ENCODE measurements at regions of chr2 and their contacts with region 1.

Region 1: DNA sequence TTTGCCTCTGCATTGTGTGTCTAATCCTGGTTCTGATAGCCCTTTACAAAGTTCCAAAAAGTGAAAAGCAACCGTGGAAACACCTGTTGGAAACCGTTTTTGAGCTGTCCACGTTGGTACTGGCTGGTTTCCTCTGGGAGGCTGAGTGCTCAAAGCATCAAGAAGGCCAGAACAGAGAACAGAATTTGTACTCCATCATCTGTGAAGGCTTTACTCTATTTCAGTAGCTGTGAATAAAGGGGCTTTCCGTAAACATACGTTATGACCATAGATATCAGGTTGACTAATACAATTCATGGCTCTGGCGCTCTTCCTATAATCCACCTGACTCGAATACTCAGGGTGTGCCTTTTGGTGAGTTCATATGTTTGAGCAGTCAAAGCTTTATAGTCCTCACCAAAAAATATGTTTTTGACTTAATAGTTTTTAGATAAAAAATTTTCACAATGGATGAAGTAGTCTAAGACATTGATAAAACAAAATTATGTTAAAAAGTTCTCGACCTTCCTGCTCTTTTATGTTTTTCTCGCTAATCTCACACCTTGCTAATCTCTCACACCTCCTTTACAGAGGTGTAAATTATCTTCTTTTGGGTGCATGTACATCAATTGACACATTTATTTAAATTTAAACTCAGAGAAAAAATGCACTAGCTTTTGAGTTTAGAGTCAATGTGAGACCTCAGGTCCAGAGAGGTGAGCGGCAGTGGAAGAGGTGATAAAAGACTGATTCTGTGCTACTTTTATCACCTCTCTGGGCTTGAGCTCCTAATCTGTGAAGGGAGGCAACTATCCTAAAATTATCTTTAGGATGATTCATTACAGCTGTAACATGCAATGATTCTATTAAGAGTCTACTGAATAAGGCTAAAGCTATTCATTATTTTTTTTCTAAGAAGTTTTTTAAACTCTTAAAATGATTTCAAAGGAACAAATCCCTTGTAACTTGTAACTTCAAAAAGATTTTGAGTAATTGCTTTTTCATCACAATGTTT is 65.3 kb downstream of the CXCR4 start:
- DNase-seq: peak; percentile 33
- ATAC-seq: no peak
- H3K4me3 Mint-ChIP-seq: peak overlapping the region; percentile 44
- H3K27ac Mint-ChIP-seq: peak overlapping the region; percentile 95
- H3K4me1 Mint-ChIP-seq: peaks cover 94% of the 10 kb centered on the region
- H3K27me3 Mint-ChIP-seq: no peaks in the 10 kb centered on the region

Region 2: DNA sequence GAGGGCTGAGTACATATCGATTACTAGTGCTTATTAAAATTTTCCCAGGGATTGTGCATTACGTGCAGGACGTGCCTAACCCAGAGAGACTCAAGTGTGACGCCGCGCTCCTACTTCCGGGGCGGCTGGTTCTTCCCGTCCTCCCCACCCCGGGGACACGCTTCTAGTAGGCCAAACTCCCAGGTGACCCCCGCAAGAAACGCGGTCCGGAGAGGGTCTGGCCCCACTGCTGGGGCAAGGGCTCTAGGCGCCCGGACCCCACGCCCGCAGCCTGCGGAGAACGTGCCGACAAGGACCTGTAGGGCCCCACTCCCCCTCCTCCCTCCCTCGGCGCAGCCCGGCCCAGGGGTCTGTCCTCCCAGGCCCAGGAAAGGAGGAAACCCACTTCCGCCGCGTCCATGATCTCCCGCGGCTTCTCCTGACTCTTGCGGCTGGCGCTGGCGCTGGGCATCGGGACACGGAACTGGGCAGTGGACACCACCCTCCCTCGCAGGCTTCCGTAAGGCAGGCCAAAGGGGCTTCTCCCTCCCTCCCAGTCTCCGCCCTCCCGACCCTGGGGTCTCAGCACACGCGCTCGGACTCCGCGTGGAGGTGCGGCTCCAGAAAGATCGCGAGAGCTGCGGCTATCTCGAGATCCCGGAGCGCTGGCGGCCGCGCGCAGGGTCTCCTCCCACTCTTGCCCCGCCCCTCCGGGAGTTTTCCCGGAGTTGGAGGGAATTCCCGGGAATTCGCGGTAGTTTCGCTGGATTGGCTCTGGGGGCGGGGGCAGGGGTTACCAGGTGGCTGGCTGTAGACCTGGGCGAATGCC is 67.4 kb before region 1 on chr2 and contains the start of gene DARS1:
- CTCF ChIA-PET with region 1: interaction called, 7 read pairs
- POLR2A ChIA-PET with region 1: interaction called, 18 read pairs
- DNase-seq: peak; percentile 89
- ATAC-seq: peak; percentile 86
- H3K4me3 Mint-ChIP-seq: peak within 1 kb of the TSS; percentile 89
- H3K27ac Mint-ChIP-seq: peak within 1 kb of the TSS; percentile 98
- H3K4me1 Mint-ChIP-seq: peaks cover 55% of the 10 kb centered on the region
- H3K27me3 Mint-ChIP-seq: no peaks in the 10 kb centered on the region
- total RNA-seq, gene DARS1: 139 to 148 TPM

Region 3: GRCh38 chr2:136008205-136008865 is 44.3 kb before region 1 on chr2:
- CTCF ChIA-PET with region 1: interaction called, 12 read pairs
- POLR2A ChIA-PET with region 1: interaction called, 40 read pairs
- DNase-seq: peak; percentile 90
- ATAC-seq: peak; percentile 96
- H3K4me3 Mint-ChIP-seq: peak overlapping the region; percentile 53
- H3K27ac Mint-ChIP-seq: peak overlapping the region; percentile 99
- H3K4me1 Mint-ChIP-seq: peaks cover 63% of the 10 kb centered on the region
- H3K27me3 Mint-ChIP-seq: no peaks in the 10 kb centered on the region

Region 4: GRCh38 chr2:136107051-136108033 is 54.7 kb after region 1 on chr2:
- CTCF ChIA-PET with region 1: interaction called, 16 read pairs
- POLR2A ChIA-PET with region 1: interaction called, 4 read pairs
- DNase-seq: no peak
- ATAC-seq: no peak
- H3K4me3 Mint-ChIP-seq: no peak overlapping the region
- H3K27ac Mint-ChIP-seq: no peak overlapping the region
- H3K4me1 Mint-ChIP-seq: peaks cover 14% of the 10 kb centered on the region
- H3K27me3 Mint-ChIP-seq: no peaks in the 10 kb centered on the region

Region 5: GRCh38 chr2:136135921-136136906 is 83.5 kb after region 1 on chr2:
- CTCF ChIA-PET with region 1: interaction called, 6 read pairs
- POLR2A ChIA-PET with region 1: interaction called, 34 read pairs
- DNase-seq: peak; percentile 86
- ATAC-seq: peak; percentile 71
- H3K4me3 Mint-ChIP-seq: peak overlapping the region; percentile 44
- H3K27ac Mint-ChIP-seq: peak overlapping the region; percentile 95
- H3K4me1 Mint-ChIP-seq: peaks cover 91% of the 10 kb centered on the region
- H3K27me3 Mint-ChIP-seq: peaks cover 11% of the 10 kb centered on the region

Region 6: DNA sequence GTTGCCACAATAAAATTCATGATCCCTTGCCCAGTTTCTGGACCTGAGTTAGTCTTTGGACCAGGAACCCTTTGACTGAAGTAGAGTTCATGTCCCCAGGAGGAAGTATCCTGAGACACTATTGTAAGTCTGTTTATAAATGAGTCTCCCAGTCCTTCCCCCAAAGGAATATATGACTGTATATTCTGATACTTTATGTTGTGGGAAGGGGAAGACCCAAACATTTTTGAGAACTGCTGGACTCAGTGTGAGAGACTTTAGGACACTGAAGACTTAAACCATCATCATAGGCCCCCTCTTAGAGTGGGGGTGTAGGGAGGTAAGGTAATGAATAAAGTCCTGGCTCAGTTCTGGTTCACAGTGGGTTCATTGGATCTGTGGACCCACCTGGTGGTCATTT is 93.9 kb after region 1 on chr2:
- CTCF ChIA-PET with region 1: no interaction called
- POLR2A ChIA-PET with region 1: no interaction called
- DNase-seq: no peak
- ATAC-seq: no peak
- H3K4me3 Mint-ChIP-seq: no peak overlapping the region
- H3K27ac Mint-ChIP-seq: no peak overlapping the region
- H3K4me1 Mint-ChIP-seq: peaks cover 14% of the 10 kb centered on the region
- H3K27me3 Mint-ChIP-seq: peaks cover 16% of the 10 kb centered on the region

Measured in activated CD8-positive, alpha-beta T cell treated with anti-CD3 and anti-CD28 coated beads, Interleukin-2, amount 10 ng/mL, durations not matched to agents 7 days and 5 days (primary cell).